Sciatic nerve (tissue), 2 donors: ENCODE measurements at regions of chr9 and their contacts with region 1.

Region 1: DNA sequence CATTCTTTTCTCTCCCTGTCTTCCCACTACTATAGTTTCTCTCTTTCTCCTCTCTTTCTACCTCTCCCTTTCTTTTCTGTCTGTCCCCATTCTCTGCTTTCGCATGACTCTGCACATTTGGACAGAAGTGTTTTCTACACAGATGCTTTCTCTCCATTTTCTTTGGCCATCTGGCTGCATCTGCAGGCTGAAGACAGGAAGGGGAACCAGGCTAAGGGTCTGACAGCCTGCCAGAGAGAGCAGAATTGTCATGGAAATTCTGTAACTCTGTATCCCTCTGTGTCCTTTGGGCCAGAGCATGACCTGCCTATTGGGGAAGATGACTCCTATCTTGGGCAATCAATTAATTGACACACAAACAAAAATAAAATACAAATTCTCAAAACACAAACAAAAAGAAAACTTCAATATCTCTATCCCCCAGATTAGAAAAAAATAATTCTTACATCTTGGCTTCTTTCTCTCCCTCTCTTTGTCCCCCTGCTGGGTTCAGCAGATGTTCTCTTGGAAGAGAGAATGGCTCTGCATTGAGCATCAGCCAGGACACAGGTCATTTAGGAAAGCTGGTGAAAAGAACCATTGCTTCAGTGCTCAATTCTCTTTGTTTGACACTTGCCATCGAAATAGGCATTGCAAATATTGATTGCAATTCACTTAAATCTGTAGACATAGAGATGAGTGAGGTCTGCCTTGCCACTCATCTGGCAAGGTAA is 415.9 kb upstream of the KLF4 start:
- DNase-seq: no peak
- ATAC-seq: peak; percentile 79

Region 2: DNA sequence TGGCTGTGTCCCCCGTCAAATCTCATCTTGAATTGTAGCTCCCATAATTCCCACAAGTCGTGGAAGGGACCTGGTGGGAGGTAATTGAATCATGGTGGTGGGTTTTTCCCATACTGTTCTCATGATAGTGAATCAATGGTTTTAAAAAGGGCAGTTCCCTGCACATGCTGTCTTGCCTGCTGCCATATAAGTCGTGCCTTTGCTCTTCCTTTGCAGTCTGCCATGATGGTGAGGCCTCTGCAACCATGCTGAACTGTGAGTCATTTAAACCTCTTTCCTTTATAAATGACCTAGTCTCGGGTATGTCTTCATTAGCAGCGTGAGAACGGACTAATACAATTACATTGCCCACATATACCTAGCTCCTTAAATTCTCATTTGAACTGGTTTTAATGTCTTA is 62.9 kb before region 1 on chr9:
- intact Hi-C with region 1: loop called (anchors 2 kb)
- DNase-seq: no peak
- ATAC-seq: no peak

Region 3: DNA sequence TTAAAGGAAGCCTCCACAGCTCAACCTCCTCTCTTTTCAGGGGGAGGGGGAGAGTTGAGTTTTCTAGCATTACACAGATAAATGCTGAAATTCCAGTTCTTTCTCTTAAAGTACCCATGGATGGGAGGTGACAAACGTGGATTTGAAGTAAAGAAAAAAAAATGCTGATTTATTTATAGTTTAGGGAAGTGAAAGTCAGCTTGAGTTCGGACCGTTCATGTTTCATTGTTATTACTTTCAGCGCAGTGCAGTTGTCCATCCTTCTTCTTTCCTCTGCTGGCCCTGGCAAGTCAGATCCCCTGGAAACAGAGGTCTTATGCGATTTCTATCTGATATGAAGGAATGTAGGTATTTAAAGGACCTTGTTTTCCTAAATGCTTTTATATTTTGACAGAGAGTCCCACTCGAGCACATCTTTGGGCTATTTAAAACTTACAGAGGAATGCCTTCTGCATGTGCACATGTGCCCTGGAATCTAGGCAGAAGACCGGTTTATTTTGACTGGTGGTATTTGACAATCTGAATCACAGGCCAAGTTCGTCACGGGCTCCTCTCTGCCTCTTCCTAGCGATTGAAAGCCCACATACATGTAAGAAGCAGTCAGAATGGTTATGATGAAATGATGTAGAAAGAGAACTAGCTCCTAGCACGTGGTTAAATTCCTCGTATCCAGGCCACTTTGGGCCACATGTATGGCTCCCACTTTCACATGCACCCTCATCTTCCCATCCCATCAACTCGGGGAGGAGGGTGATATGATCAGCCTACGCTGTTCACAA is 30.7 kb before region 1 on chr9:
- intact Hi-C with region 1: no loop called
- DNase-seq: no peak
- ATAC-seq: no peak

Region 4: DNA sequence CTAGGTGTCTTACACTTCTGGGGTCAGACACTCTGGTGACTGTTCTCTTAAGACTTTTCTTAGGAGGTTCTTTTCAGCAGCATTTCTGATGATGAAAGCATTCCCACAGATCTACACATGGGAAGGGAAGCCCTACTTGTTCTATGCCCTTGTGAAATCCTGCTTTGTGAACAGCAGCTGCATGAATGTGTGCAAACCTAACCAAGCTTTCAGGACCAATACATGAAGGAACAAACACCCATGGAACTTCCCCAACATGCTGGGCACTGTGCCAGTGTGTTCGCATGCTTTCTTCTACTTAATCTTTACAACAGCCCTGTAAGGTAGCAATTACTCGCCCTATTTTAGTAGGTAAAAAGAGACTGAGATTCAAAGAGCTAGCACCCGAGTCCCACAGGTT is 24.0 kb after region 1 on chr9:
- intact Hi-C with region 1: no loop called
- DNase-seq: peak; percentile 79
- ATAC-seq: peak; percentile 64